ENCODE measurements at regions of chr6 and their contacts with region 1.

Region 1: GRCh38 chr6:134640975-134641429 is 308.9 kb downstream of the ALDH8A1 start:
- DNase-seq: peak; percentile 16
- H3K4me3 ChIP-seq: no peak overlapping the region
- H3K27ac ChIP-seq: peak overlapping the region; percentile 34 to 65 (median 48)
- H3K4me1 ChIP-seq: peaks cover 10 to 53% (median 14%) of the 10 kb centered on the region in 3 donors
- H3K27me3 ChIP-seq: no peaks in the 10 kb centered on the region
- CTCF ChIP-seq: peak; percentile 69 to 99 (median 96)
- POLR2A ChIP-seq: no peak

Region 2: GRCh38 chr6:134389129-134389528 is 251.9 kb before region 1 on chr6:
- intact Hi-C with region 1: no loop called
- DNase-seq: no peak
- H3K4me3 ChIP-seq: no peak overlapping the region
- H3K27ac ChIP-seq: no peak overlapping the region
- H3K4me1 ChIP-seq: peaks cover 0 to 17% (median 0%) of the 10 kb centered on the region in 3 donors
- H3K27me3 ChIP-seq: no peaks in the 10 kb centered on the region
- CTCF ChIP-seq: no peak
- POLR2A ChIP-seq: no peak

Region 3: DNA sequence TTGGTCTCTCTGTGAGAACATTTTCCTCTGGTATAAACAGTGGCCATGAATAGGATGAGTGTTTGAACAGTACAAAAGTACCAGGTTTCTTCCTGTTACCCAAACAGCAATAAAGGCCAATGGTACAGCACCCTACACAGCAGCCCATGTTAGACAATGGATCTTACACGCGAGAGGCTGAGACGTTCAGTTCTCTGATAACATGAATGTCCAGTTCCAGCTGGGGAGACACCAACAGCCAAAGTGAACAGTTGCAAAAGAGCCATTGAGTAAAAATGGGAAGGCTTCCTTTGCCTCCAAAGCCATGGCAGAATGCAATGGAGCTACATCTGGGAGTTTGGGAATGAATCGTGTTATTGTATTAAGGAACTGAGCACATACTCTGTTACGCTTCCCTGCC is 76.3 kb before region 1 on chr6:
- intact Hi-C with region 1: no loop called
- DNase-seq: no peak
- H3K4me3 ChIP-seq: no peak overlapping the region
- H3K27ac ChIP-seq: no peak overlapping the region
- H3K4me1 ChIP-seq: peaks cover 0 to 17% (median 0%) of the 10 kb centered on the region in 3 donors
- H3K27me3 ChIP-seq: no peaks in the 10 kb centered on the region
- CTCF ChIP-seq: no peak
- POLR2A ChIP-seq: no peak

Region 4: GRCh38 chr6:134741200-134741536 is 100.2 kb after region 1 on chr6:
- intact Hi-C with region 1: no loop called
- DNase-seq: no peak
- H3K4me3 ChIP-seq: no peak overlapping the region
- H3K27ac ChIP-seq: no peak overlapping the region
- H3K4me1 ChIP-seq: peaks cover 0 to 17% (median 4%) of the 10 kb centered on the region in 3 donors
- H3K27me3 ChIP-seq: peaks cover 0 to 8% (median 0%) of the 10 kb centered on the region in 4 donors
- CTCF ChIP-seq: no peak
- POLR2A ChIP-seq: no peak

Region 5: GRCh38 chr6:134814086-134814709 is 173.2 kb after region 1 on chr6:
- intact Hi-C with region 1: loop called (anchors 10 kb)
- DNase-seq: no peak
- H3K4me3 ChIP-seq: no peak overlapping the region
- H3K27ac ChIP-seq: no peak overlapping the region
- H3K4me1 ChIP-seq: peaks cover 0 to 8% (median 0%) of the 10 kb centered on the region in 3 donors
- H3K27me3 ChIP-seq: peaks cover 0 to 11% (median 0%) of the 10 kb centered on the region in 4 donors
- CTCF ChIP-seq: no peak
- POLR2A ChIP-seq: no peak